Vagina (tissue), 2 donors: ENCODE measurements at regions of chr4 and their contacts with region 1.

Region 1: DNA sequence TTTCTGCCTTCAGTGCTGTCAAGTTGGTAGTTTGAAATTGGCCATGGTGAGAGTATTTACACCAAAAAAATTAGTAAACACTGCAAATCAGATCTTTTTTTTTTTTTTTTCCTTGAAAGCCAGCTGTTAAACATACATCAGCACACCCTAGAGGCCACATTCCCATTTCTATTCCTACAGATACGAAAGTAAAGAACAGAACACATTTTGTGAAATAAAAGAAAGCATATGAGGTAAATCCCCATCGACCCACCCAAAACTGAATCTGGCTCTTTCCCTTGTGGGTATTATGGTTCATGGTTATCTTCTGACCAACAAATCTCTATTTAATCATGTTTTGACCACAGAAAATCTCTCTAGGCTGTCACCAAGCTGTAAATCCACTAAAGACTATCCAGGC is 41.8 kb upstream of the AP1AR start:
- DNase-seq: no peak
- H3K4me3 ChIP-seq: no peak overlapping the region
- H3K27ac ChIP-seq: no peak overlapping the region
- H3K4me1 ChIP-seq: no peaks in the 10 kb centered on the region
- H3K27me3 ChIP-seq: no peaks in the 10 kb centered on the region
- CTCF ChIP-seq: no peak
- POLR2A ChIP-seq: no peak

Region 2: DNA sequence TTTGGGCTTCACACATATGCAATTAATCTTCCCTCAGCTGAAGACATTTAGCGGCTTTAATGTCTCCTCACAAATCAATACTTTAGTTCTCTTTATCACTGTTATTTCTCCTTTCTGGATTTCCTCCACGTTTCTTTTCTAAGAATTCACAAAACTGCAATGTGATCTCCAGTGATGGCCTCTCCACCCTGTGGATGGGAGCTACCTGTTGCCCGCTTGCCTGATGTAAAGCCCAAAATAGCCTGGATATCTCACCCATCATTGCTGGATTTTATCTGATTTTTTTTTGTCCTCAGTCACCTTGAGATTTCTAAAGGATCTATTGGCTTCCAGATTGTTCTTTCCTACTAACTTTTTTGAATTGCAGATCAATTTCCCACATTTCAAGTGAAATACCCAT is 173.8 kb before region 1 on chr4:
- intact Hi-C with region 1: no loop called
- DNase-seq: no peak
- H3K4me3 ChIP-seq: no peak overlapping the region
- H3K27ac ChIP-seq: no peak overlapping the region
- H3K4me1 ChIP-seq: no peaks in the 10 kb centered on the region
- H3K27me3 ChIP-seq: no peaks in the 10 kb centered on the region
- CTCF ChIP-seq: no peak
- POLR2A ChIP-seq: no peak

Region 3: DNA sequence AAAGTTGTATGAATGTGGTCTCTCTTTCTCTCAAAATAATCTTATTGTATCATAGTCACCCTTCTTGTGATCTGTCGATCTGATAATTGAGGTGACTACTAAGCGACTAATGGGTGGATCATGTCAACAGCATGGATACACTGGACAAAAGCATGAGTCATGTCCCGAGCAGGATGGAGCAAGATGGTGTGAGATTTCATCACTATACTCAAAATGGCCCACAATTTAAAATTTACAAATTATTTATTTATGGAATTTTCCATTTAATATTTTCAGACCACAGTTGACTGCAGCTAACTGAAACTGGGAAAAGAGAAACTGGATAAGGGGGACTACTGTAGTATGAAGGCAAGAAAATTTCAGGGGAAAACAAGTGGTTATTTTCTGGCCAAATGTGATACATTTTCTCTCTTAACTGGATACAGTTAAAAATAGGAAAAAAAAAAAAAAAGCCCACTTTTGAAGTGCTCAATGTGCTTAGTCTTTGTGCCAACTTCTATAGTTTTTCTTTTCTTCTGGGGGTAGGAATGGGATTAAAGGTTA is 19.2 kb before region 1 on chr4:
- intact Hi-C with region 1: loop called (anchors 1 kb)
- DNase-seq: no peak
- H3K4me3 ChIP-seq: no peak overlapping the region
- H3K27ac ChIP-seq: no peak overlapping the region
- H3K4me1 ChIP-seq: no peaks in the 10 kb centered on the region
- H3K27me3 ChIP-seq: no peaks in the 10 kb centered on the region
- CTCF ChIP-seq: no peak
- POLR2A ChIP-seq: no peak